Breast epithelium (tissue), 4 donors: ENCODE measurements at regions of chr16 and their contacts with region 1.

Region 1: DNA sequence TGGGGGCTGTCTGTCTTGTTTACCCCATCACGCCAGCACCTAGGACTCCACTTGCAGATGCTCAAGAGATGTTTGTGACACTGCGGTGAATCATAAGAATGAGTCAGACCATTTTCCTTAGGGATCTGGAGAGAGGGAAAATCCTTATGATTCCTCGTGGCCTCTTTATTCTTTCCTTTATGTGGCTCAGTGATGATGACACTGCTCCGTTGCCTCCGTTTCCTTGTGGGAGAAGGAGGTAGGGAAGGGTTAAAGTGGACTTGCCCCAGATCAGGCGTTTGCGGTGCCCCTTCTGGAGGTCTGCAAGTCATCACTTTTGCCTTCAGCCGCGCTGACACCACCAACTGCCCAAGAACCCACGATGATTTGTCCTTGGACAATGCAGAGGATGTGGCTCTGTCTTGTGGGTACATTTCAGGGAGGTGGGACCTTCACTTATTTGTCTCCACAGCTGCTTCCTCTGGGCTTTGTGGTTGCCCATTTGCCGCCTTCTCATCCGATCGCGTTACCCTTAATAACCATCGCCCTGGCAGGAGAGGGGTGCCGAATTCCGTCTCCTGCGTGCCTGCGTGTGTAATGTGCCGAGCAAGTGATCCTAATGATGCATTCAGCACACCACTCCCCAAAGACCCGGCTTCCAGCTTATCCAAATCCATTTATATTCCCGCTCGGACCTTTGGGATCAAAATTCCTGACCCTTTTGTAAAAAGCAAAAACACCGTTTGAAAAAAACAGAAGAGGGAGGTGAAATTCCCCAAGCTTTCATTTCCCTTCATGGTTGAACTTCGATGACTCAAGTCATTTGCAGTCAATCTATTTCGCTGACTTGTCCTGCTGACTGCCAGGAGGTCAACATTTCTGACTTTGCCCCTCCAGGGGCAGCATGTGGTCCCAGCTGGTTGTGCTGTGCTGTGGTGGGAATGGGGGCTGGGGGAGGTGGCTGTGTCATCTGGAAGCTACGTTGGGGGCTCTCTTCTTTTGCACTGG is 87.2 kb upstream of the IRX3 start:
- DNase-seq: no peak
- H3K4me3 ChIP-seq: peak overlapping the region in 1 of 3 donors; percentile 2
- H3K27ac ChIP-seq: no peak overlapping the region
- H3K4me1 ChIP-seq: no peaks in the 10 kb centered on the region
- H3K27me3 ChIP-seq: no peaks in the 10 kb centered on the region
- CTCF ChIP-seq: no peak
- POLR2A ChIP-seq: no peak

Region 2: DNA sequence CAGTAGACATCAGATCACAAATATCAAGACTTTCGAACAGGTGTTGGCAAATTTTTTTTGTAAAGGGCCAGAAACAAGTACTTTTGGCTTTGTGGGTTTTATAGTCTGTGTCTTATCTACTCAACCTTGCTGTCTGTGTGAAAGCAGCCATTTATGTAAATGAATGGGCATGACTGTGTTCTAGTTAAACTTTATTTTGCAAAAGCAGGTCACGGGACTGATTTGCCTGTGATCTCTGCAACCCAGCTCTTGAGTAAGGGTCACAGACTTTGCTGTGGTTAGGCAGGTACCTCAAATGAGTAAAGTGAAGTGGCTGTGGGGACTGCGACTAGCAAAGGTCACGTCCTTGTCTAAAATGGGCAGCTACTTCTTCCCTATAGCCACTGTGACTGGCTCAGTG is 533.4 kb before region 1 on chr16:
- intact Hi-C with region 1: no loop called
- DNase-seq: no peak
- H3K4me3 ChIP-seq: no peak overlapping the region
- H3K27ac ChIP-seq: peak overlapping the region in 1 of 2 donors; percentile 56
- H3K4me1 ChIP-seq: peaks cover 0 to 5% of the 10 kb centered on the region in 2 donors
- H3K27me3 ChIP-seq: no peaks in the 10 kb centered on the region
- CTCF ChIP-seq: no peak
- POLR2A ChIP-seq: no peak

Region 3: GRCh38 chr16:54145881-54146280 is 227.9 kb before region 1 on chr16:
- intact Hi-C with region 1: loop called (anchors 5 kb)
- DNase-seq: no peak
- H3K4me3 ChIP-seq: no peak overlapping the region
- H3K27ac ChIP-seq: no peak overlapping the region
- H3K4me1 ChIP-seq: no peaks in the 10 kb centered on the region
- H3K27me3 ChIP-seq: no peaks in the 10 kb centered on the region
- CTCF ChIP-seq: no peak
- POLR2A ChIP-seq: no peak

Region 4: DNA sequence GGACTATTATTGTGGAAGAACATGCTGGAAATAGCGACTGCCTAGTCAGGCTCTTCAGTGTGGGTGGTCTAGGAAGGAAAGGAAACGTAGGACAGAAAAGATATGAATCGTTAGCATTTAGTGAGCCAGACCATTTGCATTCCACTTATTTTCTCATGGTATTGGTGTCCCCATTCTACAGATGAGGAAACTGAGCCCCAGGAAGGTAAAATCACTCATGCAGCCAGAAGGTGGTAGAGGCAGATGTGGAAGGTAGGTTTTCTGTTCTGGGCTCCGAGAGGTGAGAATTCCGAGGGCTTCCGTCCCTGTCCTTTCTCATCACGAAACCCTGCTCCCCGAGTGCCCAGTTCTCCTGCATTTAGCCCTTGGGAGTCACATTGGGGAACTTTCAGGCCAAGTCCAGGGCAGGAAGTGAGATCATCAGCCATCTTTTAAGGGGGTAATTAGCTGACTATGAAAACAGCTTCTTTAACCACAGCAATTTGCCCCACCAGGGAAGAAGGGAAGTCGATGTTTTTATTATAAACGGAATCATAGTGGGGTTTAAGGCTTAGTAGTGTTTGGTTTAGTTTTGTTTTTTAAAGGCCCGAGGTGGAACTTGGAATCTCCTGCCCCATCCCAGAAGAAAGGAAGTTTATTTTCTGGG is 23.5 kb after region 1 on chr16:
- intact Hi-C with region 1: no loop called
- DNase-seq: no peak
- H3K4me3 ChIP-seq: no peak overlapping the region
- H3K27ac ChIP-seq: no peak overlapping the region
- H3K4me1 ChIP-seq: no peaks in the 10 kb centered on the region
- H3K27me3 ChIP-seq: no peaks in the 10 kb centered on the region
- CTCF ChIP-seq: no peak
- POLR2A ChIP-seq: no peak